Activated naive CD4-positive, alpha-beta T cell treated with anti-CD3 and anti-CD28 coated beads for 36 hours (primary cell): ENCODE measurements at regions of chrX and their contacts with region 1.

Region 1: GRCh38 chrX:31036895-31037294 is 34.9 kb downstream of the FTHL17 start:
- DNase-seq: peak; percentile 8
- H3K4me3 Mint-ChIP-seq: no peak overlapping the region
- H3K27ac Mint-ChIP-seq: no peak overlapping the region
- H3K4me1 Mint-ChIP-seq: peaks cover 2% of the 10 kb centered on the region
- H3K27me3 Mint-ChIP-seq: no peaks in the 10 kb centered on the region

Region 2: DNA sequence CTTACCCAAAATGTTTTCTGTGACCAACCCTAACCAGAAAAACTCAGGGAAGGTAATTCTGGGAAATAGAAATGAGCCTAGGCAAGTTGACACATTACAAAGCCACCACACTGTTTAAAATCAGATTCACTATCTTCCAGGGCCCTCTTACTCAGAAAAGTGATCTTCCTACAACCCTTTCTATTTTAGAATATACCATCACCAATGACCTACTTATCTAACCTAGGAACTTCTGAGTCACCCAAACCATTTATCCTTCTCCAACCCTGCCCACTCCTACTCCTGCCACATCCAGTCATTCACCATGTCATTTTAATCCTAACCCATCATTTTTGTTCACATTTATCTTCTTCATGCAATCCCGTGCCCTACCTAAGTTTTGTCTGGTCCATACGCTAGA is 54.9 kb before region 1 on chrX:
- CTCF ChIA-PET with region 1: no interaction called
- intact Hi-C with region 1: no loop called
- DNase-seq: no peak
- H3K4me3 Mint-ChIP-seq: no peak overlapping the region
- H3K27ac Mint-ChIP-seq: no peak overlapping the region
- H3K4me1 Mint-ChIP-seq: no peaks in the 10 kb centered on the region
- H3K27me3 Mint-ChIP-seq: peaks cover 1% of the 10 kb centered on the region

Region 3: DNA sequence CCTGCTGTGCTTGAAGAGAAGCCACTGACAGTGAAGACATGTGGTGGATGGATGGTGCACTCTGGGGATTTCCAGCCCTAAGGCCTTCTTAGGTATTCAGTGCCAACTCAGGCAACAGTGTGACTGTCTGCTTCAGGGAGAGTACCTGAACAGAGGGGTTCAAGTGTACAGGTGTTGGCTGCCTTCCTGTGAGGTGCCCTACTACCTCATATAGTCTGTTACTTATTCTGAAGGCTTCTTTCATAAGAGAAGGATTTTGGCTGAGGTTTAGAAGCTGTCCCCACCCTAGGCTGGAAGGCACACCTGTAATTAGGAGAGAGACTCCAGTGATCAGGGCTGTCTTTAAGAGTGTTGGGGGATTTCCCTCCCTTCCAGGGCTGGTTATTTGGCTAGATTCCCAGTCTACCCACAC is 33.2 kb after region 1 on chrX:
- CTCF ChIA-PET with region 1: interaction called, 3 read pairs
- intact Hi-C with region 1: loop called (anchors 1 kb)
- DNase-seq: peak; percentile 52
- H3K4me3 Mint-ChIP-seq: no peak overlapping the region
- H3K27ac Mint-ChIP-seq: no peak overlapping the region
- H3K4me1 Mint-ChIP-seq: peaks cover 12% of the 10 kb centered on the region
- H3K27me3 Mint-ChIP-seq: no peaks in the 10 kb centered on the region

Region 4: GRCh38 chrX:31213941-31214340 is 177.0 kb after region 1 on chrX:
- CTCF ChIA-PET with region 1: no interaction called
- intact Hi-C with region 1: loop called (anchors 10 kb)
- DNase-seq: peak; percentile 21
- H3K4me3 Mint-ChIP-seq: no peak overlapping the region
- H3K27ac Mint-ChIP-seq: no peak overlapping the region
- H3K4me1 Mint-ChIP-seq: no peaks in the 10 kb centered on the region
- H3K27me3 Mint-ChIP-seq: no peaks in the 10 kb centered on the region

Region 5: GRCh38 chrX:31293409-31293808 is 256.5 kb after region 1 on chrX:
- CTCF ChIA-PET with region 1: no interaction called
- intact Hi-C with region 1: loop called (anchors 1 kb)
- DNase-seq: no peak
- H3K4me3 Mint-ChIP-seq: no peak overlapping the region
- H3K27ac Mint-ChIP-seq: no peak overlapping the region
- H3K4me1 Mint-ChIP-seq: no peaks in the 10 kb centered on the region
- H3K27me3 Mint-ChIP-seq: no peaks in the 10 kb centered on the region

Region 6: DNA sequence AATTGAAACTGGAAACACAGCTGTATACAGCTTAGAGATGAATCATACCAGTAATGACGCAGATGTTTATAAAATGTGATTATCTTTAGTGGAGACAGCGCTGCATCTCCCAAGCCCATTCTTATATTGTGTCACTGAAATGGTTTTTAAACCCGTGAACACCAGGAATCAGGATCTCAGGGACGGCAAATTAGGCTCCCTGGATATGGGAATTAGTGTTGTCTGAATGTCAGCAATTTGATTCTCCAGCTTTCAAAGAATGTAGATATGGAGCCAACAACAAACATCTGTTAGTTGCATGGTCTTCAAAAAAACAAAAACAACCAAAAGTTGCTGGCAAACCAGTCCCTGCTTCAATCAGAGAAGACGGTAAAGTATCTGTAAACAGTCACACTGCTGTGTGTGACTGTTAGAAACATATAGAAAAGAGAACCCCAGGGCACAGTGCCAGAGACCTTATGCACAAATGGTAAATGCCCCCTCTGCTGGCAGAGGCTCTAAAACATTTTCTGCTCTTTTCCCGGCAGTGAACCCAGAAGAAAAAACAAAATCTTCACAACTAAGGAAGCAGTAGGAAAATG is 386.8 kb after region 1 on chrX:
- CTCF ChIA-PET with region 1: no interaction called
- intact Hi-C with region 1: loop called (anchors 5 kb)
- DNase-seq: peak; percentile 23
- H3K4me3 Mint-ChIP-seq: no peak overlapping the region
- H3K27ac Mint-ChIP-seq: no peak overlapping the region
- H3K4me1 Mint-ChIP-seq: no peaks in the 10 kb centered on the region
- H3K27me3 Mint-ChIP-seq: no peaks in the 10 kb centered on the region

Region 7: GRCh38 chrX:31649201-31649600 is 612.3 kb after region 1 on chrX:
- CTCF ChIA-PET with region 1: no interaction called
- intact Hi-C with region 1: loop called (anchors 5 kb)
- DNase-seq: no peak
- H3K4me3 Mint-ChIP-seq: no peak overlapping the region
- H3K27ac Mint-ChIP-seq: no peak overlapping the region
- H3K4me1 Mint-ChIP-seq: no peaks in the 10 kb centered on the region
- H3K27me3 Mint-ChIP-seq: no peaks in the 10 kb centered on the region

Region 8: GRCh38 chrX:31658360-31658759 is 621.5 kb after region 1 on chrX:
- CTCF ChIA-PET with region 1: interaction called, 7 read pairs
- intact Hi-C with region 1: loop called (anchors 1 kb)
- DNase-seq: no peak
- H3K4me3 Mint-ChIP-seq: no peak overlapping the region
- H3K27ac Mint-ChIP-seq: no peak overlapping the region
- H3K4me1 Mint-ChIP-seq: no peaks in the 10 kb centered on the region
- H3K27me3 Mint-ChIP-seq: no peaks in the 10 kb centered on the region